Ovary (tissue), 10 donors: ENCODE measurements at regions of chr21 and their contacts with region 1.

Region 1: GRCh38 chr21:41953831-41954653 is at the start of gene C2CD2:
- DNase-seq: peak; percentile 72 to 82 (median 81)
- H3K4me3 ChIP-seq: peak within 1 kb of the TSS; percentile 90
- H3K27ac ChIP-seq: peak within 1 kb of the TSS; percentile 73 to 89
- H3K4me1 ChIP-seq: peaks cover 34% of the 10 kb centered on the region
- H3K27me3 ChIP-seq: no peaks in the 10 kb centered on the region
- CTCF ChIP-seq: no peak
- EP300 ChIP-seq: no peak
- POLR2A ChIP-seq: no peak
- total RNA-seq, gene C2CD2: 24.2 to 58.6 (median 37.4) TPM

Region 2: GRCh38 chr21:41885341-41886029 is 68.6 kb before region 1 on chr21:
- intact Hi-C with region 1: loop called in 1 of 4 experiments (anchors 10 kb)
- DNase-seq: no peak
- H3K4me3 ChIP-seq: no peak overlapping the region
- H3K27ac ChIP-seq: no peak overlapping the region
- H3K4me1 ChIP-seq: no peaks in the 10 kb centered on the region
- H3K27me3 ChIP-seq: no peaks in the 10 kb centered on the region
- CTCF ChIP-seq: no peak
- EP300 ChIP-seq: no peak
- POLR2A ChIP-seq: no peak

Region 3: GRCh38 chr21:41977034-41977950 is 23.2 kb after region 1 on chr21:
- intact Hi-C with region 1: no loop called
- DNase-seq: no peak
- H3K4me3 ChIP-seq: no peak overlapping the region
- H3K27ac ChIP-seq: no peak overlapping the region
- H3K4me1 ChIP-seq: no peaks in the 10 kb centered on the region
- H3K27me3 ChIP-seq: no peaks in the 10 kb centered on the region
- CTCF ChIP-seq: no peak
- EP300 ChIP-seq: no peak
- POLR2A ChIP-seq: no peak